ENCODE measurements at regions of chr3 and their contacts with region 1.

Region 1: GRCh38 chr3:27484015-27484844 is at the start of gene SLC4A7:
- DNase-seq: peak; percentile 94
- ATAC-seq: peak; percentile 96
- H3K4me3 ChIP-seq: peak within 1 kb of the TSS; percentile 62
- H3K27ac ChIP-seq: peak within 1 kb of the TSS; percentile 90
- H3K4me1 ChIP-seq: peaks cover 2% of the 10 kb centered on the region; the same call in 1 of the 2 replicates
- H3K27me3 ChIP-seq: no peaks in the 10 kb centered on the region
- CTCF ChIP-seq: no peak
- POLR2A ChIP-seq: peak; percentile 96
- RAD21 ChIP-seq: peak; percentile 17
- total RNA-seq, gene SLC4A7: 50.4 and 86.7 TPM in 2 replicates

Region 2: GRCh38 chr3:27528791-27529190 is 44.6 kb after region 1 on chr3:
- CTCF ChIA-PET with region 1: no interaction called
- POLR2A ChIA-PET with region 1: no interaction called
- dilution Hi-C with region 1: no loop called
- in situ Hi-C with region 1: loop called (anchors 5 kb)
- intact Hi-C with region 1: no loop called
- DNase-seq: no peak
- ATAC-seq: no peak
- H3K4me3 ChIP-seq: no peak overlapping the region
- H3K27ac ChIP-seq: no peak overlapping the region
- H3K4me1 ChIP-seq: peaks cover 21% of the 10 kb centered on the region
- H3K27me3 ChIP-seq: no peaks in the 10 kb centered on the region
- CTCF ChIP-seq: no peak
- POLR2A ChIP-seq: no peak
- RAD21 ChIP-seq: no peak

Region 3: DNA sequence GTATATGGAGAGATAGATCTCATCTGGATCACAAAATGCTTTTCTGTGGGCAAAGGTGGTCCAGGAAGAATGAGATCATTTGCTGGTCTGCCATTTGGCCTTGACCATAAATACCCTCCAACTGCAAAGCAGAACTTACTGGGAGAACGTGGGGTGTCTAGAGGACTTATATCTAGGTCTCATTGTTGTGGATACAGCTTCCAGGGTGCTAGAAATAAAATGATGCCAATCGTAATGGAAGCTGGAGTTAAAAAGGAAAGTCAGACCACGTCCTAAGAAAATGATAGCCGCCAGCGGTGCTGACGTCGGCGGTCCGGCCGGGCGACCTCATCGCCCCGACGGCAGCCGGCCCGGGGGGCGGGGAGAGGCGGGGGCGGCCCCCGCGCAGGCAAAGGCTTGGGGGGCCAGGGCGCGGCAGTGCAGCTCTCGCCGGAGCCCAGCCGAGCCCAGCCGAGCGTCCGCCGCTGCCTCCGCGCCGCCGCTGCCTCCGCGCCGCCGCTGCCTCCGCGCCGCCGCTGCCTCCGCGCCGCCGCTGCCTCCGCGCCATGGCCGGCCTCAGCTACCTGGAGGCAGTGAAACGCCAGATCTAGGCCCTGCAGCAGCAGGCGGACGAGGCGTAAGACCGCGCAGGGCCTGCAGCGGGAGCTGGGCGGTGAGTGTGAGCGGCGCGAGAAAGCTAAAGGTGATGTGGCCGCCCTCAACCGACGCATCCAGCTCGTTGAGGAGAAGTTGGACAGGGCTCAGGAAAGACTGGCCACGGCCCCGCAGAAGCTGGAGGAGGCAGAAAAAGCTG is 148.4 kb after region 1 on chr3:
- CTCF ChIA-PET with region 1: no interaction called
- POLR2A ChIA-PET with region 1: no interaction called
- dilution Hi-C with region 1: no loop called
- in situ Hi-C with region 1: no loop called
- intact Hi-C with region 1: loop called (anchors 5 kb)
- DNase-seq: peak; percentile 55
- ATAC-seq: peak; percentile 80
- H3K4me3 ChIP-seq: peak overlapping the region; percentile 58
- H3K27ac ChIP-seq: peak overlapping the region; percentile 93
- H3K4me1 ChIP-seq: no peaks in the 10 kb centered on the region; the same call in 1 of the 2 replicates
- H3K27me3 ChIP-seq: no peaks in the 10 kb centered on the region
- CTCF ChIP-seq: no peak
- POLR2A ChIP-seq: no peak
- RAD21 ChIP-seq: no peak

Region 4: GRCh38 chr3:27681245-27681748 is 197.1 kb after region 1 on chr3:
- CTCF ChIA-PET with region 1: interaction called, 3 read pairs
- POLR2A ChIA-PET with region 1: interaction called, 3 read pairs
- dilution Hi-C with region 1: no loop called
- in situ Hi-C with region 1: loop called (anchors 10 kb)
- intact Hi-C with region 1: loop called (anchors 1 kb)
- DNase-seq: peak; percentile 83
- ATAC-seq: peak; percentile 52
- H3K4me3 ChIP-seq: peak overlapping the region; percentile 28; the same call in 1 of the 2 replicates
- H3K27ac ChIP-seq: peak overlapping the region; percentile 55; the same call in 1 of the 2 replicates
- H3K4me1 ChIP-seq: peaks cover 10% of the 10 kb centered on the region
- H3K27me3 ChIP-seq: no peaks in the 10 kb centered on the region
- CTCF ChIP-seq: peak; percentile 81
- POLR2A ChIP-seq: no peak
- RAD21 ChIP-seq: peak; percentile 72

Measured in IMR-90 (cell line).